GM23248 (cell line): ENCODE measurements at regions of chrX and their contacts with region 1.

Region 1: DNA sequence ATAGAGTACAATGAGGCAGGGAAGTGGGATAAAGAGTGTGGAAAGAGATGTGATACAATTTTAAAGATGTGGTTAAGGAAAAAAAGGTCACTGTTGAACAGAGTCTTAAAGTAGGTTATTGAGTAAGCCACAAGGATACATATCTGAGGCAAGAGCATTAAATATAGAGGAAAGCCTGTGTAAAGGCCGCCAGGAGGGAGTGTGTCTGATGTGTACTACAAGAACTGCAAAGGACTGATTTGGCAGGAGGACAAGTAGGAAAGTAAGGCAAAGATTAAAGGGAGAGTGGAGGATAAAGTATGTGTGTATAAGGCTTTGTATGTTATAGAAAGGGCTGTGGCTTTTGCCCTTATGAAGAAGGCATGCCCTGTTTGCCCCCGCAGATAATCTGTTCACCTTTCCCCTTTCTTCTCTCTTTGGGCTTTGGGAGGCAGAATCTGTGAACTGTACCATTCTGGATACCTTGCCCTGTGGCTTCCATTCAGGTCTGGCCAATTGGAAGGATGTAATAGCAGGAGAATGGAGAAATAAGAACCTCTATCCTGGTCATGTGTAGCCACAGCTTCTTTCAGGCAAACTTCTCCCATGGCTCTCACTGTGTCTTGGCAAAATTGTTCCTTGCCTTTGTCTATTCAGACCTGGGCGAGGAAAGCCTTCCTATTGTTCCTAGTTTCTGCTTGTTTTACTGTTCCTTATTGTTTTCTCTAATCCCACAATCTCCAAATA is 68.9 kb upstream of the FAM47B start:
- DNase-seq: no peak
- H3K4me3 ChIP-seq: no peak overlapping the region
- H3K27ac ChIP-seq: no peak overlapping the region
- H3K4me1 ChIP-seq: peaks cover 26% of the 10 kb centered on the region
- H3K27me3 ChIP-seq: no peaks in the 10 kb centered on the region

Region 2: GRCh38 chrX:34956916-34957315 is 83.3 kb after region 1 on chrX:
- in situ Hi-C with region 1: loop called (anchors 25 kb)
- DNase-seq: peak; percentile 58
- H3K4me3 ChIP-seq: no peak overlapping the region
- H3K27ac ChIP-seq: no peak overlapping the region
- H3K4me1 ChIP-seq: peaks cover 11% of the 10 kb centered on the region
- H3K27me3 ChIP-seq: no peaks in the 10 kb centered on the region